ENCODE measurements at regions of chr17 and their contacts with region 1.

Region 1: GRCh38 chr17:48131216-48131824 is 23.8 kb downstream of the SNX11 start:
- DNase-seq: no peak
- H3K4me3 ChIP-seq: no peak overlapping the region
- H3K27ac ChIP-seq: no peak overlapping the region
- H3K4me1 ChIP-seq: no peaks in the 10 kb centered on the region
- H3K27me3 ChIP-seq: peaks cover 21% of the 10 kb centered on the region
- CTCF ChIP-seq: peak; percentile 92

Region 2: DNA sequence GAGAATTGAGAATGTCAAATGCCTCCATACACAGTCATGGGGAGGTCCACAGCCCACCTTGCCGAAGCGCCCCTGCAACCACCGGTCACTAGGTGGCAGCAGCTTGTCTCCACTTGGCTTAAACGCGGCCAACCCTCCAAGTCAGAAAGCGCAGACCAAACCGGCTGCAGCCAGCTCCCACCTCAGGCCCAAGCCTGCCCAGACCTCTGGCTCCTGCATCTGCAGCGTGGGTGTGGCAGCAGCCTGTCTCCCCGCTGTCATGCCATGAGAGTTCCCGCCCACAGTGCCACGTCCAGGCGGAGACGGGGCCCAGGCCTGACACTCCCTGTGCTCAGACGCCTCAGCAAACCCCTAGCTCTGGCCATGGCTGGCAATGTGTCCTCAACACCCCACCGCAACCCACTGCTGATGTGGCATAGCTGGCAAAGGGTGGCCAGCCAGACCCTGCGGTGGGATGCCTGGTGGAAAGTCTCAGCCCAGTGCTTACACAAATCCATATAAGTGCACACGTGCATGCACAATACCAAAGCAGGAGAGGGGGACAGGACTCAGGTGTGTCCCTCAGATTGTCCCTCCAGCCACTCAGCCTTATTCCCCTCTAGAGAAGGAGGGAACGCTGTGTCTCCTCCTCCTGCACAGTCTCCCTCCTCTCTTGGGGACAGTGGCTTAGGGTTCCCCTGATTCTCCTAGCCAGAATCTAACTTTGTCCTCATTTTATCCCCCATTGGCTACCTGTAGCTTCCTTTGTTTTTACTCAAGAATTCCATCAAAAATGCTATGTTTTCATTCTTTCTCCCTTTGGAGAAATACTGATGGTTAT is 104.6 kb before region 1 on chr17:
- intact Hi-C with region 1: loop called (anchors 2 kb)
- DNase-seq: peak; percentile 83
- H3K4me3 ChIP-seq: no peak overlapping the region
- H3K27ac ChIP-seq: peak overlapping the region; percentile 90
- H3K4me1 ChIP-seq: peaks cover 62% of the 10 kb centered on the region
- H3K27me3 ChIP-seq: peaks cover 27% of the 10 kb centered on the region
- CTCF ChIP-seq: peak; percentile 93

Region 3: GRCh38 chr17:48074315-48075081 is 56.8 kb before region 1 on chr17:
- intact Hi-C with region 1: loop called (anchors 10 kb)
- DNase-seq: peak; percentile 62
- H3K4me3 ChIP-seq: no peak overlapping the region
- H3K27ac ChIP-seq: peak overlapping the region; percentile 34
- H3K4me1 ChIP-seq: peaks cover 10% of the 10 kb centered on the region
- H3K27me3 ChIP-seq: no peaks in the 10 kb centered on the region
- CTCF ChIP-seq: peak; percentile 90

Region 4: DNA sequence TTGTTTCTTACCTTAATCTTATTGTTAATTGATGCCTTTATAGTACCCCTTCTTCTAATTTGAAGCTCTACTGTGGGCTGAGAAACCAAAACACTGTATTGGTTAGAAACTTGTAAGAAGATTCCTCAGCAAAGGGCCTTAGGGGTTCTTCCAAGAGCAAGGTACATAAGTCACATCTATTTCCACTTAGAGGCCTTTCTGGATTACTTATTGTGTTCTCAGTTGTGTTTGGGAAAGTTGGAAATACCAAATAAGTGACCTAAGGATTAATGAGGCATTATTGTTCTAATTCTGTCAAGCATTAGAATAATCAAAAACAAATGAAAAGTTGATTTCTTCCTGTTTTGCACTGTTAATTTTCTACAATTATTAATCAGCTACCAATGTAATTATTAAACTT is 212.9 kb after region 1 on chr17:
- intact Hi-C with region 1: no loop called
- DNase-seq: no peak
- H3K4me3 ChIP-seq: no peak overlapping the region
- H3K27ac ChIP-seq: no peak overlapping the region
- H3K4me1 ChIP-seq: no peaks in the 10 kb centered on the region
- H3K27me3 ChIP-seq: peaks cover 87% of the 10 kb centered on the region
- CTCF ChIP-seq: no peak

Measured in left ventricle myocardium inferior (tissue), 1 donor.